CD8-positive, alpha-beta memory T cell (primary cell): ENCODE measurements at regions of chr5 and their contacts with region 1.

Region 1: GRCh38 chr5:39194466-39195136 is 24.8 kb downstream of the FYB1 start:
- DNase-seq: no peak
- H3K4me3 ChIP-seq: peak overlapping the region; percentile 45
- H3K4me3 Mint-ChIP-seq: peak overlapping the region; percentile 42 to 96 (median 79)
- H3K27ac ChIP-seq: peak overlapping the region; percentile 40
- H3K27ac Mint-ChIP-seq: peak overlapping the region; percentile 67 to 97 (median 90)
- H3K4me1 ChIP-seq: peaks cover 67% of the 10 kb centered on the region
- H3K4me1 Mint-ChIP-seq: peaks cover 75 to 81% (median 78%) of the 10 kb centered on the region in 3 donors
- H3K27me3 ChIP-seq: no peaks in the 10 kb centered on the region
- H3K27me3 Mint-ChIP-seq: no peaks in the 10 kb centered on the region

Region 2: DNA sequence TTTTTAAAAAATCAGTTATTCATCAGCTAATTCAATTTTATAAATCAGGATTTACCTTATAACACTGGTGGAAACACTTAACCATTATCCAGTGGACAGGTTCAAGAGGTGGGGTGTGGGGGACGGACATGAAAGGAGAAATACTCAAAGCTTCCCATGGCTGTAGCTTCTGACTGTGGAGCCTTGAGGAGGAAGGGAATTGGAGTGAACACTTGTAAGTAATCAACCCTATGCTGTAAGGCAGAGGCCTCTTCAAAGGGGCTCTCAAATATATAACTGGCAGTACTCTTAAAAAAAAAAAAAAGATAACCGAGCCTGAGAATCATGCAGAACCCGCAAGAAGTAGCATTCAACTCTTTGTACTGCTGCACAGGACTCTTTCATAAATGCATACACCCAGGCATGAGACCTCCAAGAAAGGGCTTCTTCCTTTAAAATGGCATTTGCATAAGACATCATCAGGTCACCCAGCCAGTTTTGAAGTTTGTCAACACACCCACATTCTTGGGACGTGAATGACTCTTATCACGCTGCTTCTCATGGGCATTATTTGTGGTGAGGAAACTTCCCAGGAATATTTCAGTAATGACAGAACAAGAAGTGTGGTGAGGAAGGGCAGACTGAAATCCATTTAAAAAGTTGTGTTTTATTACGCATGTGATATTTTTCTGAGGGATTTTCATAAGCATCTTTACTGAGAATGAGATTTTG is 340.7 kb before region 1 on chr5:
- CTCF ChIA-PET with region 1: no interaction called
- POLR2A ChIA-PET with region 1: no interaction called
- DNase-seq: no peak
- H3K4me3 ChIP-seq: no peak overlapping the region
- H3K4me3 Mint-ChIP-seq: no peak overlapping the region
- H3K27ac ChIP-seq: no peak overlapping the region
- H3K27ac Mint-ChIP-seq: no peak overlapping the region
- H3K4me1 ChIP-seq: no peaks in the 10 kb centered on the region
- H3K4me1 Mint-ChIP-seq: no peaks in the 10 kb centered on the region
- H3K27me3 ChIP-seq: no peaks in the 10 kb centered on the region
- H3K27me3 Mint-ChIP-seq: peaks cover 27 to 38% of the 10 kb centered on the region in 2 donors

Region 3: DNA sequence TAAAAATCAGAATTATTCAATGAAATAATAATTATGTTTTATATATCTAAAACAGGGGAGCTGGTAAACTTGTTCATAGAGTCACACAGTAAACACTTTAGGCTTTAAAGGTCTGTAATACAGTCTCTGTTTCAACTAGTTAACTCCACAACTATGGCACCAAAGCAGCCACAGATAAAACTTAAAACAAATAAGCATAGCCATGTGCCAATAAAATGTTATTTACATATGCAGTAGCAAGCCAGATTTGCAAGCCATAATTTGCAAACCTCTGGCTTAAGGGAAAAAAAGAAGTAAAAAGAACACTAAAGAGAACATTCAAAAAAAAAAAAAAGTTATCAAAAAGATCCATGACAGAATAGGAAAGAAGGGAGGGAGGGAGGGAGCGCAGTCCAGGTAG is 145.3 kb before region 1 on chr5:
- CTCF ChIA-PET with region 1: no interaction called
- POLR2A ChIA-PET with region 1: interaction called, 10 read pairs
- DNase-seq: no peak
- H3K4me3 ChIP-seq: no peak overlapping the region
- H3K4me3 Mint-ChIP-seq: no peak overlapping the region
- H3K27ac ChIP-seq: no peak overlapping the region
- H3K27ac Mint-ChIP-seq: no peak overlapping the region
- H3K4me1 ChIP-seq: peaks cover 20% of the 10 kb centered on the region
- H3K4me1 Mint-ChIP-seq: peaks cover 72 to 90% (median 85%) of the 10 kb centered on the region in 3 donors
- H3K27me3 ChIP-seq: no peaks in the 10 kb centered on the region
- H3K27me3 Mint-ChIP-seq: no peaks in the 10 kb centered on the region

Region 4: GRCh38 chr5:39209924-39210323 is 15.3 kb after region 1 on chr5:
- CTCF ChIA-PET with region 1: interaction called, 32 read pairs
- POLR2A ChIA-PET with region 1: interaction called, 24 read pairs
- DNase-seq: peak; percentile 67 to 91 (median 83)
- H3K4me3 ChIP-seq: peak overlapping the region; percentile 55
- H3K4me3 Mint-ChIP-seq: peak overlapping the region; percentile 67 to 84 (median 79)
- H3K27ac ChIP-seq: peak overlapping the region; percentile 18
- H3K27ac Mint-ChIP-seq: peak overlapping the region; percentile 94 to 99 (median 96)
- H3K4me1 ChIP-seq: peaks cover 98% of the 10 kb centered on the region
- H3K4me1 Mint-ChIP-seq: peaks cover 96 to 100% (median 100%) of the 10 kb centered on the region in 3 donors
- H3K27me3 ChIP-seq: no peaks in the 10 kb centered on the region
- H3K27me3 Mint-ChIP-seq: no peaks in the 10 kb centered on the region

Region 5: DNA sequence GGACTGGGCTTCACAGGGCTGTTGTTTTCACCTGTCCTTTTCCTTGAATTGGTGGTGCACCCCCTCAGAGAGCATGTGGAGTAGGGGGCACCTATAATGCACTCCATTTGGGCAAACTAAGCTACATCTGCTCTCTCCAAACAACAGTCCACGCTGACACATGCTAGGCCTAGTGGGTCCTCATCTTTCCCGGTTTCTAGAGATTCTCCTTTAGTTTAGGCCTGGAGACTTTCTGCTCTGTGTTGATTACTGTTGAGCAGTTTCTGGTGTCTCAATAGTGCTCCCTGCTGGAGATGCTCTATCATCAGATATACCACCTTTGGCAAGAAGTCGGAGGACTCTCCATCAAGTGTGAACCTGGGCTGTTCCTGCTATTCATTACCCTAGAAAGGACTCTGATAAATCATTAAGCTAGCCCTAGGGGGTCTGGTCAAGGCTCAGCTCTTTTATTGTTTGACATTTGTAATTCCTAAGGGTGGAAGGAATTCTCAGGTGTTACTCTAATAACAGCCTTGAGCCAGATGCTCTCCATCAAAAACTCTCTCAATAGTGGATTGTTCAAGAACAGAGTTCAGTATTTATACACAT is 88.7 kb after region 1 on chr5:
- CTCF ChIA-PET with region 1: interaction called, 16 read pairs
- POLR2A ChIA-PET with region 1: no interaction called
- DNase-seq: peak; percentile 32 to 76 (median 70)
- H3K4me3 ChIP-seq: no peak overlapping the region
- H3K4me3 Mint-ChIP-seq: peak overlapping the region in 2 of 7 donors; percentile 4 to 32
- H3K27ac ChIP-seq: no peak overlapping the region
- H3K27ac Mint-ChIP-seq: peak overlapping the region in 6 of 8 donors; percentile 16 to 81 (median 54)
- H3K4me1 ChIP-seq: peaks cover 6% of the 10 kb centered on the region
- H3K4me1 Mint-ChIP-seq: peaks cover 5 to 23% (median 17%) of the 10 kb centered on the region in 3 donors
- H3K27me3 ChIP-seq: no peaks in the 10 kb centered on the region
- H3K27me3 Mint-ChIP-seq: peaks cover 0 to 5% of the 10 kb centered on the region in 2 donors